ENCODE measurements at regions of chr6 and their contacts with region 1.

Region 1: GRCh38 chr6:35146453-35146852 is 5.3 kb upstream of the TCP11 start:
- DNase-seq: peak; percentile 55
- ATAC-seq: peak; percentile 72
- H3K4me3 ChIP-seq: no peak overlapping the region
- H3K27ac ChIP-seq: no peak overlapping the region
- H3K4me1 ChIP-seq: peaks cover 18% of the 10 kb centered on the region
- H3K27me3 ChIP-seq: no peaks in the 10 kb centered on the region
- CTCF ChIP-seq: peak; percentile 76
- POLR2A ChIP-seq: no peak
- RAD21 ChIP-seq: peak; percentile 84

Region 2: DNA sequence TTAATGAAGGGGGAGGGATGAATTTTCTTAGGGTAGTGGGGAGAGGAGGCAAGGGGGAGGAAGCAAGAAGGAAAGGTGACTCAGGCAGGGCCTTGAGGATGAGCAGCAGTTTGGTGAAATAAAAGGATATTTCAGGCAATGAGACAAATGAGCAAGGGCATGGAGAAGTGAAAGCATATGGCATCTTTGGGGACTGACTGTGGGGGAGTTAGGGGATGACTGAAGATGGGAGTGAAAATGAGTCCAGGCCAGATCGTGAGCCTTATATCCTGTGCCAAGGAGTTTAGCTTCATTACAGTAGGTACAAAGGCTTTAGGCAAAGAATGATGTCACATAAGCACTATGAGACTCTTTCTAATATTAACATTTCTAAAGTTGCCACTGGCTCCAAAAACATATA is 501.7 kb before region 1 on chr6:
- CTCF ChIA-PET with region 1: no interaction called
- POLR2A ChIA-PET with region 1: no interaction called
- dilution Hi-C with region 1: no loop called
- in situ Hi-C with region 1: no loop called
- intact Hi-C with region 1: no loop called
- DNase-seq: no peak
- ATAC-seq: no peak
- H3K4me3 ChIP-seq: no peak overlapping the region
- H3K27ac ChIP-seq: no peak overlapping the region
- H3K4me1 ChIP-seq: peaks cover 2% of the 10 kb centered on the region; the same call in 1 of the 2 replicates
- H3K27me3 ChIP-seq: no peaks in the 10 kb centered on the region
- CTCF ChIP-seq: no peak
- POLR2A ChIP-seq: no peak
- RAD21 ChIP-seq: no peak

Region 3: DNA sequence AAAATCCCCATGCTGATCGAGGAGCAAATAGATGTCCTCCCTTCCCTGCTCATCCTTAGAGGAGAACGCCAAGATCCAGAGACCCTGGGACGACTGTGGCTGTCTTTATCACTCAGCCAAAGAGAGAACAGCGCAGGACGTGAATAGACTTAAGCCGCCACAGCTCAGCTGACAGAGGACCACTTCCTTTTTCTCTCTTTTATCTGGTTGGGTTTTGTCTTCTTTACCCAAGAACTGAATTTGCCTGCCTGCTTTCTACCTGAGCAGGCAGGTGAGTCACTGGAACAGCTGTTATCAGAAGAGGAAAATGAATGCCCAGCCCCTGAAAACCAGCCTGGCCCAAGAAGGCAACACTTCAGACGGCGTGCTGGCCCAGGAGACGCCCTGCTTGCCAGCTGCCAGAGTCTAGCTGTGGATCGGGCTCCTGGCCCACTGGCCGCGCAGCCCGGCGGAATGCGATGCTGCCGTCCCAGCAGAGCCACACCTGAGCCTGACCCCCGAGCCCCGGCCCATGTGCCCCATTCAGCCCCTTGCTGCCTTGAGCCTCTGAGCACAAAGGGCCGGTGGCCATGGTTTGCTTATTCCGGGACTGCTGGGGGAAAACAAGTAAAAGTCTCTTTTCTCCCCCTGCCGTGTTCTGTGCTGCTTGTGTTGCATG is 87.5 kb before region 1 on chr6:
- CTCF ChIA-PET with region 1: no interaction called
- POLR2A ChIA-PET with region 1: no interaction called
- dilution Hi-C with region 1: no loop called
- in situ Hi-C with region 1: no loop called
- intact Hi-C with region 1: no loop called
- DNase-seq: no peak
- ATAC-seq: no peak
- H3K4me3 ChIP-seq: no peak overlapping the region
- H3K27ac ChIP-seq: no peak overlapping the region
- H3K4me1 ChIP-seq: peaks cover 3% of the 10 kb centered on the region
- H3K27me3 ChIP-seq: no peaks in the 10 kb centered on the region
- CTCF ChIP-seq: no peak
- POLR2A ChIP-seq: no peak
- RAD21 ChIP-seq: no peak

Region 4: DNA sequence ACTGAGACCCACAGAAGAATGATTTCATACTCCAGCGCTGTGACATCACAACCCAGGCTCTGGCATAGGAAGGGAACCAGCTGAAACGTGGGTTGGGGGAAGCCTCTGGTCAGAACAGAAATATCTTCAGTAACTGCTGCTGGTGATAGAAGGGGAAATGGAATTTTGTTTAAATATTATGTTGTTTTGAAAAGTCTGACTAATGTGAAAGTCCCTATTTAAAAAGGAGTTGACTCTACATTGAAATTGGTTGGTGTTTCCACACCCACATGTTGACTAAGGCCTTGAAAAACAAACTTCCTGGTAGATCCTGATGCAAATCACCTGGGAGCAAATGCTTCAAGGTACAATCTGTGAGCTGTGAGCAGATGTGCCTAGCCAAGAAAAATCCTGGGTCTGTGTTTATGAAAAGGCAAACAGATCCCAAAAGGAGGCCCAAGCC is 19.2 kb after region 1 on chr6:
- CTCF ChIA-PET with region 1: interaction called, 11 read pairs
- POLR2A ChIA-PET with region 1: no interaction called
- dilution Hi-C with region 1: no loop called
- in situ Hi-C with region 1: no loop called
- intact Hi-C with region 1: no loop called
- DNase-seq: peak; percentile 87
- ATAC-seq: peak; percentile 74
- H3K4me3 ChIP-seq: no peak overlapping the region
- H3K27ac ChIP-seq: peak overlapping the region; percentile 16
- H3K4me1 ChIP-seq: peaks cover 23% of the 10 kb centered on the region
- H3K27me3 ChIP-seq: no peaks in the 10 kb centered on the region; the same call in 1 of the 2 replicates
- CTCF ChIP-seq: no peak
- POLR2A ChIP-seq: no peak
- RAD21 ChIP-seq: no peak; the same call in 1 of the 2 replicates

Region 5: GRCh38 chr6:35173427-35174087 is 27.1 kb after region 1 on chr6:
- CTCF ChIA-PET with region 1: interaction called, 3 read pairs
- POLR2A ChIA-PET with region 1: interaction called, 18 read pairs
- dilution Hi-C with region 1: no loop called
- in situ Hi-C with region 1: no loop called
- intact Hi-C with region 1: no loop called
- DNase-seq: no peak
- ATAC-seq: no peak
- H3K4me3 ChIP-seq: no peak overlapping the region
- H3K27ac ChIP-seq: no peak overlapping the region
- H3K4me1 ChIP-seq: peaks cover 17% of the 10 kb centered on the region
- H3K27me3 ChIP-seq: no peaks in the 10 kb centered on the region
- CTCF ChIP-seq: no peak
- POLR2A ChIP-seq: no peak
- RAD21 ChIP-seq: no peak

Region 6: GRCh38 chr6:35202066-35202546 is 55.7 kb after region 1 on chr6:
- CTCF ChIA-PET with region 1: interaction called, 46 read pairs
- POLR2A ChIA-PET with region 1: no interaction called
- dilution Hi-C with region 1: no loop called
- in situ Hi-C with region 1: loop called (anchors 5 kb)
- intact Hi-C with region 1: loop called (anchors 1 kb)
- DNase-seq: no peak
- ATAC-seq: peak; percentile 16; the same call in 1 of the 2 replicates
- H3K4me3 ChIP-seq: no peak overlapping the region
- H3K27ac ChIP-seq: no peak overlapping the region
- H3K4me1 ChIP-seq: peaks cover 7% of the 10 kb centered on the region
- H3K27me3 ChIP-seq: peaks cover 2% of the 10 kb centered on the region; the same call in 1 of the 2 replicates
- CTCF ChIP-seq: no peak
- POLR2A ChIP-seq: no peak
- RAD21 ChIP-seq: no peak

Region 7: DNA sequence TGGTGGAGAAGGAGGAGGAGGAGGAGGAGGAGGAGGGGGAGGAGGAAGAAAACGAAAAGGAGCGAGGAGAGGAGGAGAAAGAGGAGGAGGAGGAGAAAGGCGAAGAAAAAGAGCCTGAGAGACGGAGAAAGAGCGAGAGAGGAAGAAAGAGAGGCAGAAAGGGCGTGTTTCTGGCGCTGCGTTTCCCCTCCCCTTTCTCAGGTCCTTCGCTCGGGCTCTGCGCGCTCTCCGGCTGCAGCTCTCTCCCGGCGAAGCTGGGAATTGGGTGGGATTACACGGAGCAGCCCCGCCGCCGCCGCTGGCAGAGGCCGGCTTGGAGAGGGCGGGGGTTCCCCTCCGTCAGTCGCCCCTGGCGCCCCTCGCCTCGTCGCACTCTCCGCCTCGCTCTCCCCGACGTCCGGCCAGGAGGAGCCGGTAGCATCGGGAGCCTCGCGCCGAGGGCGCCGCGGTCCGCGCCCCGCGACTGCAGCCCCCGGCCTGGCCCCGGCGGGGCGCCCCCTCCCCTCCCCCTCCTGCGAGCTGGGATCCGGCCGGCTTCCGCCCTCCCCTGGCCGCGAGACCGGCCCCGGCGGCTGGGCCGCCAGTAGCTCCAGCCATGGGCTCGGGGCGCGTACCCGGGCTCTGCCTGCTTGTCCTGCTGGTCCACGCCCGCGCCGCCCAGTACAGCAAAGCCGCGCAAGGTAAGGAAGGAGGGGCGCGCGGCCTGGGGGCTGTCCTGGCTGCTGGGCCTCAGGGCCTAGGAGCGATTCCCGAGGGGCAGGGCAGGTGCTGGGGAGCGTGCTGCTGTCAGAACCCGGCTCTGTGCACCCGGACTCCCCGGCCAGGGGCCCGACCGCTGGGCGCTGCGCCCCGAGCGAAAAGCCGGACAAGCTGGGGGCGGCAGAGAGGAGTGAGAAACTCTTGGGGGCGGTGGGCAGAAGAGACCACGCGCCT is 67.6 kb after region 1 on chr6 and contains the start of gene SCUBE3:
- CTCF ChIA-PET with region 1: no interaction called
- POLR2A ChIA-PET with region 1: no interaction called
- dilution Hi-C with region 1: no loop called
- in situ Hi-C with region 1: no loop called
- intact Hi-C with region 1: loop called (anchors 2 kb)
- DNase-seq: peak; percentile 42
- ATAC-seq: peak; percentile 61
- H3K4me3 ChIP-seq: peak within 1 kb of the TSS; percentile 62
- H3K27ac ChIP-seq: peak within 1 kb of the TSS; percentile 28
- H3K4me1 ChIP-seq: peaks cover 31% of the 10 kb centered on the region
- H3K27me3 ChIP-seq: peaks cover 26% of the 10 kb centered on the region
- CTCF ChIP-seq: no peak
- POLR2A ChIP-seq: no peak
- RAD21 ChIP-seq: no peak
- total RNA-seq, gene SCUBE3: 19.9 and 21.1 TPM in 2 replicates

Region 8: GRCh38 chr6:35240840-35241801 is 94.7 kb after region 1 on chr6:
- CTCF ChIA-PET with region 1: interaction called, 13 read pairs
- POLR2A ChIA-PET with region 1: no interaction called
- dilution Hi-C with region 1: no loop called
- in situ Hi-C with region 1: loop called (anchors 5 kb)
- intact Hi-C with region 1: loop called (anchors 1 kb)
- DNase-seq: peak; percentile 44
- ATAC-seq: peak; percentile 87
- H3K4me3 ChIP-seq: no peak overlapping the region
- H3K27ac ChIP-seq: no peak overlapping the region
- H3K4me1 ChIP-seq: peaks cover 5% of the 10 kb centered on the region; the same call in 1 of the 2 replicates
- H3K27me3 ChIP-seq: no peaks in the 10 kb centered on the region
- CTCF ChIP-seq: peak; percentile 94
- POLR2A ChIP-seq: no peak
- RAD21 ChIP-seq: peak; percentile 96

Region 9: DNA sequence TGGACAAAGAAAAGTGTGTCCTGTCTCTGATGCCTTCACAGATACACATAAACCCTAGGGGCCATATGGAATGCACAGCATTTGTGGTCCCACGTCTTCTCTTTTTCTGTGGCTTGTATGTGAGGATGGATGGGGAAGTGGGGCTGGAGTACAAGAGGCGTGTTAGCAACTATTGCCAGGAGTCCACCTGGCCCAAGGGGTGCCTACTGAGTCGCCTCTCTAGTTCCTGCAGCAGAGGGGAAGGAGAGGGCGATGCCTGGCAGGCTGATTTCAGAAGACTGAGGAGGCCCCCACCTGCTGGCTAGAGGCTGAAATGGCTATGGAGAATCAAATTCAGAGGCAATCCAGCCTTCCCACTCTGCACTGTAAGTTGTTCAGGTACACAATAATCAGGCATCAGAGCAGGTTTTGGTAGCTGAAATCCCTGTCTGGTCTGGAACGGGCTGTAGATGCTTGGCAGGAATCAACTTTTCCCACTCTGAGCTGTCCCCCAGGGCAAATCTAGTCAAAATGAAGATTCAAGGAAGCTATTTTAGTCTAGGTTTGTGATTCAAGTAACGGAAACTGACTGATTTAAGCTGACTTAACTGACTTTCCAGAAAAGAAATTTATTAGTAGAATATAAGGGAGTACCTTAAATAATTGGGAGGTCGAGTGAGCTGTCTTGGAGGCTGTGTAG is 181.0 kb after region 1 on chr6:
- CTCF ChIA-PET with region 1: no interaction called
- POLR2A ChIA-PET with region 1: no interaction called
- dilution Hi-C with region 1: no loop called
- in situ Hi-C with region 1: no loop called
- intact Hi-C with region 1: loop called (anchors 2 kb)
- DNase-seq: peak; percentile 55
- ATAC-seq: peak; percentile 96
- H3K4me3 ChIP-seq: no peak overlapping the region
- H3K27ac ChIP-seq: no peak overlapping the region
- H3K4me1 ChIP-seq: no peaks in the 10 kb centered on the region
- H3K27me3 ChIP-seq: no peaks in the 10 kb centered on the region; the same call in 1 of the 2 replicates
- CTCF ChIP-seq: peak; percentile 67
- POLR2A ChIP-seq: no peak
- RAD21 ChIP-seq: peak; percentile 66

Region 10: GRCh38 chr6:35485402-35485877 is 339.0 kb after region 1 on chr6:
- CTCF ChIA-PET with region 1: no interaction called
- POLR2A ChIA-PET with region 1: no interaction called
- dilution Hi-C with region 1: no loop called
- in situ Hi-C with region 1: no loop called
- intact Hi-C with region 1: no loop called
- DNase-seq: no peak
- ATAC-seq: peak; percentile 42
- H3K4me3 ChIP-seq: no peak overlapping the region
- H3K27ac ChIP-seq: peak overlapping the region; percentile 70
- H3K4me1 ChIP-seq: peaks cover 39% of the 10 kb centered on the region
- H3K27me3 ChIP-seq: no peaks in the 10 kb centered on the region
- CTCF ChIP-seq: no peak
- POLR2A ChIP-seq: no peak
- RAD21 ChIP-seq: no peak